Gastrocnemius medialis (tissue), 4 donors: ENCODE measurements at regions of chr1 and their contacts with region 1.

Region 1: DNA sequence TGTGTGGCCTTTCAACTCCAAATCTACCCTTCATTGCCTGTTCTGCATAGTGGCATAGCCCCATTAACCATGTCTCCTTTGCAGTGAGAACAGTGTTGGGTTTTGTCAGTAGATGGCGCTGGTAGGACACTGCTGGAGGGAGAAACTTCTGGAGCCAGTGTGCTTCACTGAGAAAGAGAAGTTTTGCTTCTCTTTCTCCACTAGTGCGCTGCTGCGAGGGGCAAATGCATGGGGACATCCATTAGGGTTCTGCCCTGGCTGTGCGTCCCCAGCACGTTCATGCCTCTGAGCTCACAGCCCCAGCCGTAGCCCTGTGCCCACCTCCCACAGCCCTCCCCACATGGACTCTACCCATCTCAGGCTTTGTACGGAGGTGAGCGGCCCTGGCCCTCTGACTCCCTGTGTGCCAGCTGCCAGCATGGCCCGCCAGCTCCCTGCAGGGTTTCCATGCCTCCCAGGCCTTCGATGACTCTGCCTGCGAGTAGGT is 53.1 kb downstream of the RIMS3 start:
- DNase-seq: peak; percentile 17 to 43
- ATAC-seq: peak; percentile 95 to 96
- H3K4me3 ChIP-seq: no peak overlapping the region
- H3K27ac ChIP-seq: no peak overlapping the region
- H3K4me1 ChIP-seq: peaks cover 0 to 3% of the 10 kb centered on the region in 2 donors
- H3K27me3 ChIP-seq: no peaks in the 10 kb centered on the region
- CTCF ChIP-seq: peak; percentile 66 to 86 (median 74)
- POLR2A ChIP-seq: no peak

Region 2: DNA sequence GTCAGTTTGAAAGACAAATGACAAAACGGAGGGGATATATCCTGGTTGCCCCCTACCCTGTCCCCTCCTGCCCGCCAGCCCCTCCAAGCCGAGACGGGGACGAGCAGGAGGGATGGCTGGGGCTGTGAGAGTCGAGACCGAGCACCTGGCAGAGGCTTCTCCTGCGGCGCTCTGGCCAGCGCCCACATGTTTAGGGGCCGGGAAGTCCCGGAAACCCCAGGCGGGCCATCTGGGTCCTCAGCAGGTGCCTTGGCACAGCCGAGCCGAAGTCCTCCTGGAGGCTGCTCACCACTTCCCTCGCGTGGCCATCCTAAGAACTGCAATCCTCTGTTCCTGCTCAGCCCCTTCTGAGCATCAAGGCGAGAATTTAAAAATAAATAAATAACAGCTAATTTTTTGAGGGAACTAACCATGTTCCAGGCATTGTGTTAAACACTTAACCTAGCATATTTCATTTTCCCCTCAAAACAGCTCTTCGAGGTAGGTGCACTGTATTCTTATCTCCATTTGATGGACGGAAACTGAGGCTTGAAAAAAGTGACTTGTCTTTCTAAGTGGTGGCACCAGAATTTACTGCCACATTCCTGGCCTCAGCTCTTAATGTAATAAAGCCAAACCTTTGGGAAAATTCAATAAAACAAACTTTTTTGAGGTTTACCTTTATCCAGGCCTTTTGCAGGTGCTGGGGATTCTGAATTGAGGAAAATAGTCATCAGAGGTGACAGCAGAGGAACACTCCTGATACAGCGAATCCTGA is 56.6 kb after region 1 on chr1:
- in situ Hi-C with region 1: loop called in 1 of 4 experiments (anchors 10 kb)
- intact Hi-C with region 1: loop called (anchors 1 kb)
- DNase-seq: peak; percentile 30 to 63
- ATAC-seq: peak; percentile 64 to 74
- H3K4me3 ChIP-seq: peak overlapping the region; percentile 32 to 44 (median 36)
- H3K27ac ChIP-seq: no peak overlapping the region
- H3K4me1 ChIP-seq: peaks cover 4 to 6% of the 10 kb centered on the region in 2 donors
- H3K27me3 ChIP-seq: no peaks in the 10 kb centered on the region
- CTCF ChIP-seq: peak; percentile 78 to 97 (median 83)
- POLR2A ChIP-seq: no peak

Region 3: DNA sequence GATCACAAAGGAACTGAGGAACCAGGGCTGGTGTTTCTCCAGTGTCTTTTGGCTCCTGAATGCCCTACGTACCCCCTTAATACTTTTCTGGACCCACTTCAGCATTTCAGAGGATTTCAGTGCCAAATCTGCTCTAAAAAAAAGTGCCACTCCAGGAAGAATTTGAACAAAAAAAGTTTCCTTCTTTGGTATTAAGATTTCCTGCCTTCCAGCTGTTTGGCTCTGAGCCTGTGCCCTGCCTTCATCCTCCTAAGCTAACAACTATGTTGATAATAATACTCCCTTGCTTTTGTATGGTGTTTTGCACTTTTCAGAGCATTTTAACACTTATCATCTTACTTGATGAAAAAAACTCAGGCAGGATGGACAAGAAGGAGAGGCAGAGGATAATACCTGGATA is 64.1 kb after region 1 on chr1:
- in situ Hi-C with region 1: loop called in 1 of 4 experiments (anchors 10 kb)
- intact Hi-C with region 1: no loop called
- DNase-seq: no peak
- ATAC-seq: no peak
- H3K4me3 ChIP-seq: no peak overlapping the region
- H3K27ac ChIP-seq: no peak overlapping the region
- H3K4me1 ChIP-seq: no peaks in the 10 kb centered on the region
- H3K27me3 ChIP-seq: no peaks in the 10 kb centered on the region
- CTCF ChIP-seq: no peak
- POLR2A ChIP-seq: no peak

Region 4: GRCh38 chr1:40849801-40850592 is 237.6 kb after region 1 on chr1:
- in situ Hi-C with region 1: loop called (anchors 5 to 10 kb)
- intact Hi-C with region 1: loop called (anchors 1 kb)
- DNase-seq: peak; percentile 34 to 60
- ATAC-seq: peak; percentile 84
- H3K4me3 ChIP-seq: no peak overlapping the region
- H3K27ac ChIP-seq: no peak overlapping the region
- H3K4me1 ChIP-seq: no peaks in the 10 kb centered on the region
- H3K27me3 ChIP-seq: no peaks in the 10 kb centered on the region
- CTCF ChIP-seq: peak; percentile 89 to 94 (median 89)
- POLR2A ChIP-seq: no peak

Region 5: DNA sequence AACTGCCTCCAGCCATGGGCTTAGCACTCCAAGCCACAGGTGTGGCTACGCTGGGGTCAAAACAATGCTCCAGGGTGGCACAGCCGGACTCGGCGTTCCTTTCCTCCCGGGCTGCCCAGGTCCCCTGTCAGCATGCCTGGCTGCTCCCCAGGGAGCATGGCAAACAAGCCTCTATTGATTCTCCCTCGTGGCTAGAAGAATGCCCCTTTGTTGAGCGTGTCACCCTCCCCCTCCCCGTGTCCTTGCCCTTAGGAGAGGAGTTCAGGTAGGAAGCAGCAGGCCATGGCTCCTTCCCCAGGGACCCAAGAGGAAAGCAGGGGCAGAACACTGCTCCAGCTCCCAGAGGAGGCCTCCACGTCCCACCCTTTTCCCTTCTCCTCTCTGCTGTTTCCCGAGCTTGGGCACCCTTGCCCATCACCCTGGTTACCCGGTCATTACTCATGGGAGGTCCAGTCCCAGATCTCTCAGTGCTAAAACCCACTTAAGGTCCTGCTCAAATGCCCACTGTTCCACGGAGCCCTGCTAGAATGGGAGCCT is 307.2 kb after region 1 on chr1:
- in situ Hi-C with region 1: no loop called
- intact Hi-C with region 1: no loop called
- DNase-seq: no peak
- ATAC-seq: no peak
- H3K4me3 ChIP-seq: no peak overlapping the region
- H3K27ac ChIP-seq: no peak overlapping the region
- H3K4me1 ChIP-seq: no peaks in the 10 kb centered on the region
- H3K27me3 ChIP-seq: no peaks in the 10 kb centered on the region
- CTCF ChIP-seq: no peak
- POLR2A ChIP-seq: no peak

Region 6: GRCh38 chr1:40951943-40952743 is 339.8 kb after region 1 on chr1:
- in situ Hi-C with region 1: loop called in 3 of 4 experiments (anchors 10 kb)
- intact Hi-C with region 1: loop called (anchors 1 kb)
- DNase-seq: peak; percentile 32 to 53
- ATAC-seq: peak; percentile 56 to 75
- H3K4me3 ChIP-seq: no peak overlapping the region
- H3K27ac ChIP-seq: no peak overlapping the region
- H3K4me1 ChIP-seq: no peaks in the 10 kb centered on the region
- H3K27me3 ChIP-seq: peaks cover 0 to 4% (median 0%) of the 10 kb centered on the region in 3 donors
- CTCF ChIP-seq: peak; percentile 73 to 88 (median 86)
- POLR2A ChIP-seq: no peak

Region 7: GRCh38 chr1:41529621-41530395 is 917.4 kb after region 1 on chr1:
- in situ Hi-C with region 1: no loop called
- intact Hi-C with region 1: no loop called
- DNase-seq: peak in 1 of 2 donors; percentile 4
- ATAC-seq: no peak
- H3K4me3 ChIP-seq: no peak overlapping the region
- H3K27ac ChIP-seq: no peak overlapping the region
- H3K4me1 ChIP-seq: no peaks in the 10 kb centered on the region
- H3K27me3 ChIP-seq: no peaks in the 10 kb centered on the region
- CTCF ChIP-seq: no peak
- POLR2A ChIP-seq: no peak